AG04449 (cell line): ENCODE measurements at regions of chr12 and their contacts with region 1.

Region 1: DNA sequence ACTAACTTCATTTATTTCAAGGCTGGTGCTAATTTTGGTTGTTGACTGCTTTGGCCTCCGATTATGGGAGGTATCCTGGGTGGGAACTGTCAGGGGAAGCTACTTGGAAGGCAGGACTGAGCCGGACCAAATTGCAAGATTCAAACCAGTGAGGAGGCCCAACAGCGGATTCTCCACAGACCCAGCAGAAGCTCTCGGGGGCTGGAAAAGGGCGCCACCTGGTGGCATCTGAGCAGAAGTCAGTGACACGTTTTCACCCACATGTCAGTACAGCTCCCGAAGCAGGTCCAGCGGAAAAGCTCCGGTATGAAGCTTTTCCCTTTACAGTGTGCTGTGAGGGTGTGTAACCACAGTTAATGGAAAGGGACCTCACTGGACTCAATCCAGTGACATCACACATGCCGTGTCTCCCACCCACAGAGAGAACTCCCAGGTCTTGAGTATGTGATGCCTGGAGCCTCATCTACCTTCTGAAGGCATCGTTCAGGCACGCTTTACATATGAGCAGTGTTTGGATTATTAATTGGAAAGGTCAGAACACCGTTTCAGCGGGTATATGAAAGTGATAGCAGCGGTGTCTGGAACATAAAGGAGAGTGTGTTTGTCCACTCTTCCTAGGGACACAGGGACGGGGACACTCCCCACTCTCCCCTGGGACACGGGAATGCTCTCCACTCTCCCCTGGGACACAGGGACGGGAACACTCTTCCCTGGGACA is 3.6 kb upstream of the P2RX2 start:
- DNase-seq: peak; percentile 28
- H3K4me3 ChIP-seq: no peak overlapping the region
- CTCF ChIP-seq: peak; percentile 89

Region 2: DNA sequence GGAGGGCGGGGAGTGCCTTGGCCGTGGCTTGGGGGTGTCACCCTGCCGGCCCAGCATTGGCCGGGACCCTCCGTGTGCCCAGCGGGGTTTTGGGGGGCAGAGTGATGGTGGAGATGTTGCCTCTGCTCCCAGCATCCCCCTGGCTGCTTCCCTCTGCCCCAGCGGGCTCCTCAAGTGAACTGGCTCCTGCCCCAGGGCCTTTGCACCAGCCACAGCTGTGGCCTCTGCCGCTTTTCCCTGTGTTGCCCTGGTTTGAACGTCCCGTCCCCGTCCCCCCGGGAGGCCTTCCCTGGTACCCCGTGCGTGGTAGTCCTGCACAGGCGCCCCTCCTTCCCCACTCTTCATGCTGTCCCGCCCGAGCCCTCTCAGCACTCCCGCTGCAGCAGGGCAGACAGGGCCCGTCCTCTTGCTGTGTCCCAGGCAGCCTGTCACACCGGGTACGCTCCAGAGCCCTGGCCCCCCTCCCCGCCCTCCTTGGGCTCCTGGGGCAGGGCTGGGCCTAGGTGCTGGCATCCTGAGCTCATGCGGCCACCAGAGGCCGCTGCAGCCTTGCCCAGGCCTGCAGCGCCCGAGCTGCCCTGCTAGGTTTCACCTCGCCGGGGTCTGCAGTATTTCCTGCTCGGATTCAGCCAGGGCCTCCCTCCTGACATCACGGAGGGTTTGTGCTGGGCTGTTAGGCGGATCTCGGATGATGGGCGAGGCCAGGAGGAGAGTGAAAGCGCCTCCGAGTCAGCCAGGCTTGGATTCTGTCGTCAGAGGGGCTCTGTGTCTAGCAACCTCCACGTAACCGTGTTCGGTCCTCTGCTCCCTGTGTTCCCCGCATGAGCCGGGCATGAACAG is 461.3 kb before region 1 on chr12:
- CTCF ChIA-PET with region 1: interaction called, 13 read pairs
- POLR2A ChIA-PET with region 1: no interaction called
- DNase-seq: peak; percentile 3
- H3K4me3 ChIP-seq: peak overlapping the region; percentile 29
- CTCF ChIP-seq: peak; percentile 96

Region 3: DNA sequence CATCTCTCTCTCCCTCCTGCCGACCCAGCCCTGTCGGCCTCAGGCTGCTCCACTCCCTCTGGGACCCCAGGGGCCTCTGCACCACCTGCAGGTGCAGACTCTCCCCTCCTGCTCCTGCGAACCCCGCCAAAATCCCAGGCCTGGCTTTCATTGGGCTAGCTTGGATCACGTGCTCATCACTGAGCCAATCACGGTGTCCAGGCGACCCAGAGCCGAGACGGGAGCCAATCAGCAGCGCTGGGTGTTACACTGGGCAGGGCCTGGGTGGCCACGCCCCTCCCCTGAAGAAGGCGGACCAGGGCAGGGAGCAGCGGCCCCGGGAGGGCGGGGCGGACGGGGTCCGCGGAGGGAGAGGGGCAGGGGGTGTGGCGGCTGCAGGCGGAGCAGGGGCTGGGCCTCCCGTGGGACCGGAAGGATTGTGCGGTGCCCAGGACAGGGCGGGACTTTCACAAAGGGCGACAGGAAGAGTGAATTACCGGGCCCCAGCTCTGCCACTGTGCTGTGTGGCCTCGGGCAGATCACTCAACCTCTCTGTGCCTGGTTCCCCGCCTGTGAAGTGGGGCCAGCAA is 191.7 kb before region 1 on chr12:
- CTCF ChIA-PET with region 1: interaction called, 23 read pairs
- POLR2A ChIA-PET with region 1: no interaction called
- DNase-seq: no peak
- H3K4me3 ChIP-seq: no peak overlapping the region
- CTCF ChIP-seq: no peak

Region 4: GRCh38 chr12:132600048-132601032 is 14.7 kb before region 1 on chr12:
- CTCF ChIA-PET with region 1: interaction called, 214 read pairs
- POLR2A ChIA-PET with region 1: interaction called, 5 read pairs
- DNase-seq: no peak
- H3K4me3 ChIP-seq: peak overlapping the region; percentile 54
- CTCF ChIP-seq: peak; percentile 85

Region 5: DNA sequence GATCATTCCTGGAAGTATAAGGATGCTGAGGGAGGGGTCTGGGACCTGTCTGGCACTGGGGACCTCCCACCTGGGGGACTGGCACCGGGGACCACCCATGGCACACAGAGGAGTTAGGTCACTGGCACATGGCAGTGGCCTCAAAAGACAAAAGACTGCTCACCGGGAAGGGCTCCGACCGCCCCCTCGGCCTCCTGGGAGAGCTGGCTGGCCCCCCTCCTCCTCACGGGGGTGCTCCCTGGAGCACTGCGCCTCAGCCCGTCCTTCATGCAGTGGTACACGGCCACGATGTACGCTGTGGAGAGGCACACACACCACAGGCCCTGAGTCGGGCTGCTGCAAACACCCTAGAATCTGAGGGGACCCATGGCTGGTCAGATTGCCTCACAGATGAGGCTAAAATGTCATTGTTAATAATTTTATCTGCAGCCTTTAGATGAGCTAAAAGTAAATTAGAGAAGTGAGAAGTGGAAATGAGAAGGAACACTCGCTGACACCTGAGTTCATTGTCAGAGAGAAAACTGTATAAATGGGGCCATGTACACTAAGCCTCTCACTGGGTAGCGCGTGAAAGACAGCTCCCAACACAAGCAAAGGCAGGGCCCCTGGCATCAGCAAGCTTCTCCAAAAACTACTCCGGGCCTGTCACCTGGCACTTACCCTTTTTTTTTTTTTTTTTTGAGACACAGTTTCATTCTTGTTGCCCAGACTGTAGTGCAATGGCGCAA is 17.6 kb after region 1 on chr12:
- CTCF ChIA-PET with region 1: interaction called, 18 read pairs
- POLR2A ChIA-PET with region 1: no interaction called
- DNase-seq: no peak
- H3K4me3 ChIP-seq: no peak overlapping the region
- CTCF ChIP-seq: no peak

Region 6: DNA sequence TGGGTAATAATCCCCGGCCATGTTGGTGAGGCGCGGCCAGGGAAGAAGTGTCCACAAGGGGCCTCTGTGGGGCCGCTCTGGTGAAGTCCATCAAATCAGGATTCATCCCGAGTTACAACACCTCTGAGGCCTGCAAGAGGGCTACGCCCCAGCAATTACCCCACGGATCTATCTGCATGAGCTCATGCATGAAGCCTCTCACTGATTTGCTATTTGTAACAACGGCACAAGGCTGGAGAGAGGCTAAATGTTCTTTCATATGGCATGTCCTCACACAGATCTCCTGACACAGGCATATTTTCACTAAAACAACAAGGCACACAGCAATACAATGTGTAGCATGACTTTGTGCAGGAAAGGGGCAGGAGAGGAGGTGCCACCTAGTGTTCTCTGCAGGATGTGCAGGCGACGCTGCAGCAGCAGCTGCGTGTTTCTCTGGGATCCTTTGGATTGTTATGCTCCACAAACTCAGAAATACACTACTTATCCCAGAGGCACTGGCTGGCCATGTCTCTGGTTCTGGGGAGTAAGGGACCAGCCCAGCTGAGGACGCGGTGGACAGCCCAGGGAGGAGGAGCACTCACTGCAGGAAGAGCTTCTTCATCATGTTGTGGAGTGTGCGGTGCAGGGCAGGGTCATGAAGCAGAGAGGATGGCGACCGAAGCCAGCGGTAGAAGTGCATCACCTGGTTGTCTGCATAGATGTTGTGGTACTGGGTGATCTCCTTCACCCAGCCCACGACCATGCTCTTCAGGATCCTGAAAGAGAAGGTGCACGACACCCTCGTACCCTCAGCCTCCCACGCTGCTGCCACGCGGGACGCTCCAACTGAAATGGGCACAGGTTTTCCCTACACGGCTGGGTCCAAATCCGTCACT is 23.8 kb after region 1 on chr12:
- CTCF ChIA-PET with region 1: interaction called, 15 read pairs
- POLR2A ChIA-PET with region 1: no interaction called
- DNase-seq: peak; percentile 10
- H3K4me3 ChIP-seq: no peak overlapping the region
- CTCF ChIP-seq: peak; percentile 92

Region 7: DNA sequence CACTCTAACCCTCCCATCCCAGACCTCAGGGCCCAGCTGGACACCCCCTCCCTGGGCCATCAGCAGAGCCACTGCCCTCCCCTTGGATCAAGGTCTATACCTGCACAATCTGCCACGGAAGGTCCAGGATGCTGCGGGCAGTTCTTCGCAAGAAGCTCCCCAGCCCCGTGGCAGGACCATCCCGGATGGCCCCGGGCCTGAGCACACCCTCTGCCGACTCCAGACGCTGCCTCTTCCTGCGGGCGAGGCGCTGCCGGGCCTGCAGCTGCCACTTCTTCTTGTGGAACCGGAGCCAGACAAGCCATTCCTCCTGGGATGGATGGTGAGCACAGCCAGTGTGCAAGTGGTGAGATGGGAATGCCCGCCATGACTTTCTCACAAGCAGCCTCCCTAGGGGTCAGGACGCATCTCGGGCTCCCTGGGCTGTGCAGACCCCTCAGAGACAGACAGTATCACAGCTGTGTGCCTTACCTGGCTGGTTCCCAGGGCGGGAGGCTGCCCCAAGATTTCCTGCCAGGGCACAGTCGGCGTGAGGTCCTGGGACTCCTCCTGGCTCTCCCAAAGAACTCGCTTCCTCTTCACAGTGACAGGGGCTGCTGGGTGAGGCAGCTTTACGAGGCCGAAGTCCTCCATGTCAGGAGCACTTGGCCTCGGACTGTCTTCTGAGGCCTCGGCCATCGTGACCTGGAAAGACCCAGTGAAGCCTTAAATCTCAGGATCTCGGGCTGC is 34.4 kb after region 1 on chr12:
- CTCF ChIA-PET with region 1: interaction called, 10 read pairs
- POLR2A ChIA-PET with region 1: no interaction called
- DNase-seq: no peak
- H3K4me3 ChIP-seq: no peak overlapping the region
- CTCF ChIP-seq: no peak

Region 8: DNA sequence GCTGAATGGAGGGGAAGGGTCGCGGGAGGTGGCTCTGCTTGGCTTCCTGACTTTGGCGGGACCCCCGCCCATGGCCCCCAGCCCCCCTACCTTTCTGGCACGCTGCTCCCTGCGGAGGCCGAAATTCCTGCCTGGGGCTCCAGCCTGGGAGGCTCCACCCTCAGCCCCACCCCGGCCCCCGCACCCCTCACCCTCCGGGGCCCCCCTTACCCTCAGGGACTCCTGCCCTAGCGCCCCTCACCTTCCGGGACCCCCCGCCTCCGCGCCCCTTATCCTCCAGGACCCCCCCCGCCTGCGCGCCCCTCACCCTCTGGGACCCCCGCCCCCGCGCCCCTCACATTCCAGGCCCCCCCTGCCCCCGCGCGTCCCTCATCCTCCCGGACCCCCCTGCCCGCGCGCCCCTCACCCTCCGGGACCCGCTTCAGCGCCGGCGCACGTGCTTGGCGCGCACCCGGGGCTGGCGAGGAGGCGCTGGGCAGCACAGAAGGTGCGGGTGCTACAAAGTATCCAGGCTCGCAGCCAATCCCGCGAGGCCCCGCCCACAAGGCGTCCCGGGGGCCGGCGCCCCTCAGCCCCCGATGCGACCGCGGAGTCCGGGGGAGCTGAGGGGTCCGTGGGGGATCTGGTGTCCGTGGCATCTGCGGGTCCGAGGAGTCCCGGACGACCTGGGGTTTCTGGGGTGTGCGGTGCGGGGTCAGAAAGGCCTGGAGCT is 620.5 kb after region 1 on chr12 and contains the start of gene ANHX:
- CTCF ChIA-PET with region 1: no interaction called
- POLR2A ChIA-PET with region 1: no interaction called
- DNase-seq: no peak
- H3K4me3 ChIP-seq: no peak within 1 kb of the TSS
- CTCF ChIP-seq: no peak